CD4-positive, alpha-beta memory T cell (primary cell): ENCODE measurements at regions of chr17 and their contacts with region 1.

Region 1: DNA sequence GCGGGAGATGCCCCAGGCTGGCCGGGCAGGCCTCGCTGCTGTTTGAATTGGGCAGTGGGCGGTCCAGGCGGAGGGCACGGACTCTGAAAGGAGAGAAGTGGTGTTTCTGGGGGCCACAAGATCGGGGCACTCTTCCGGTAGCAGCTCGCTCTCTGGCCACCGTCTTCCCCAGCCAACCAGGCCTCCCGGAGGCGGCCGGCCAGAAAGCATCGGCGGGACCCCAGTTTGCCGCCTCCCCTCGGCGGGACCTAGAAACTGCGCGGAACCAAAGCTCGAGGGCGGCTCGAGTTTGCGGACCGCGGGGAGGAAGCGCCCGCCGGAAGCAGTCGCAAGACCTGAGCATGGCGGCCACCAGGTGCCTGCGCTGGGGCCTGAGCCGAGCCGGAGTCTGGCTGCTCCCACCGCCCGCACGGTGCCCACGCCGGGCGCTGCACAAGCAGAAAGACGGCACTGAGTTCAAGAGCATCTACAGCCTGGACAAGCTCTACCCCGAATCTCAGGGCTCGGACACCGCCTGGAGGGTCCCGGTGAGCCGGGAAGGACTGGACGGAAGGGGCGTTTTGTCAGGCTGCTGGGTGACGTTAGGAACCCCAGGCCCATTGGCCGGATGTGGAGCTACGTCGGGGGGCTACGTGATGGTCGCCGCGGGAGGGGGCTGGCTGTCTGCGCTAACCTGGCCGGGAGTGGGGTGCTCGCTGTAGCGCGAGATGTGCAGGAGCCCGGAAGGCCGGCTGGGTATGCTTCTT is at the start of gene MRPL58:
- DNase-seq: peak; percentile 75 to 79 (median 76)
- H3K4me3 ChIP-seq: peak within 1 kb of the TSS; percentile 85 to 90
- H3K4me3 Mint-ChIP-seq: peak within 1 kb of the TSS; percentile 93 to 98 (median 96)
- H3K27ac ChIP-seq: peak within 1 kb of the TSS; percentile 71
- H3K27ac Mint-ChIP-seq: peak within 1 kb of the TSS; percentile 80 to 94 (median 92)
- H3K4me1 ChIP-seq: peaks cover 19% of the 10 kb centered on the region
- H3K4me1 Mint-ChIP-seq: peaks cover 20 to 44% (median 32%) of the 10 kb centered on the region in 4 donors
- H3K27me3 ChIP-seq: no peaks in the 10 kb centered on the region
- H3K27me3 Mint-ChIP-seq: no peaks in the 10 kb centered on the region
- total RNA-seq, gene MRPL58: 22.6 to 26.7 TPM

Region 2: DNA sequence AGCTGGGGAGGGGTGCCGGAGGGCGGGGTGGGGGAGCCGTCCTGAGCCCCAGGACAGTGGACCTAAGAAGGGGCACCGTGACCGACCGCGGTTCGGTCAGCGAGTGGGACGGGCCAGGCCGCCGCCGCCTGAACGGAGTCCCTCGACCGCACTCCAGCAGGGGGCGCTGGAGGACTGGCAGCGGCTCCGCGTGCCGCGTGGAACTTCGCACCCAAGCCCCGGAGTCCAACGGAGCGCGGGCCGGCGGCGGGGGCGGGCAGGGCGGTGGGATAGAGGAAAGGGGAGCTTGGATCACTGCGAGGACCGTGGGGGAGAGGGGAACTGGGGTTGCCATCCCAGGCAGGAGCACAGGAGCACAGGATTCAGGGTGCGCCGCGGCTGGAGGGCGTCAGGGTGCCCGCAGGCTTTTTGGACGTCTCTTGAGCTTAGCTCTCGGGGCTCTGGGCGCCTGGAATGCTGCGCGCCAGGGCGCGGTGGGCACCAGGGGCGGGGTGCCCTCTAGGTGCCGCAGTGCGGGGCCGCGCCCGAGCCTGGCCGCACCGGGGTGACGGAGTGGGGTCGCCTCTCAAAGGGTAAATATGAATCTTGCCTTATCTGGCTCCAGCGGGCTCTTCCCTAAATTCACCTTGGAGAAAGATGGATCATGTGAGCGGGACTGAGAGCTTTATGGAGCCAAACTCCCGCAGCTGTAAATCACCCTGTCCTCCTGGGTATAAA is 88.8 kb before region 1 on chr17:
- CTCF ChIA-PET with region 1: no interaction called
- POLR2A ChIA-PET with region 1: no interaction called
- intact Hi-C with region 1: no loop called
- DNase-seq: peak; percentile 57 to 76 (median 68)
- H3K4me3 ChIP-seq: peak overlapping the region in 1 of 2 donors; percentile 14
- H3K4me3 Mint-ChIP-seq: peak overlapping the region in 6 of 8 donors; percentile 13 to 54 (median 44)
- H3K27ac ChIP-seq: no peak overlapping the region
- H3K27ac Mint-ChIP-seq: no peak overlapping the region
- H3K4me1 ChIP-seq: peaks cover 18% of the 10 kb centered on the region
- H3K4me1 Mint-ChIP-seq: peaks cover 1 to 17% (median 11%) of the 10 kb centered on the region in 4 donors
- H3K27me3 ChIP-seq: peaks cover 32% of the 10 kb centered on the region
- H3K27me3 Mint-ChIP-seq: peaks cover 40 to 46% of the 10 kb centered on the region in 2 donors

Region 3: DNA sequence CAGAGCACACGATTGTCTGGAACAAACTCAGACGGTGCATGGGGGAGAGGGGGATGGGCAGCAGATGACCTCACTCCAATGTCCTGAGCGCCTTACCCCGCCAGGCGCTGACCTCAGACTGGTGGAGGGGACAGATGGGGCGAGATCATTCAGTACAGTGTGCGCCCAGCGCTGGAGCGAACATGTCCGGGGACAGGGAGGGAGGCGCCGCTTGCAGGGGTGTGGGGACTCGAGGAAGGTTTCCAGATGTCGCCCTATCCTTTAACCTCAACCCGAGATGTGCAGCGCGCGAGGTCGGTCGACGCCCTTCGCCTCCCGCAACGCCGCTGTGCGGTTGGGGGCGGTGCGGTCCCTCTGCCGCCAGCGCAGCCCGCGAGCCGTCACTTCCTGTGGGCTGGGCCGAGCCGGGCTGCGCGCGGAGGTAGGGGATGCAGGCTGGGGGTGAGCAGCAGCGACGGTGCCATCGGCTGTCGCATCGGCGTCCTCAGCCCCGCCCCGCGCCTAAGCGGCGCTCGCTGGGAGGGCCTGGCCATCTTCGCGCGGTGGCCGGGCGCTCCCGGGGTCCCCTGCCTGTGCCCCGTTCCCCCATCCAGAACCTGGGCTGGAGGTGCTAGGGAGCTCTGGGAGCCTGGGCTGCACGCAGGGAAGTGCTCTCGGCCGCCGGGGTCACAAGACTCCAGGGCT is 30.4 kb before region 1 on chr17:
- CTCF ChIA-PET with region 1: interaction called, 22 read pairs
- POLR2A ChIA-PET with region 1: interaction called, 20 read pairs
- intact Hi-C with region 1: loop called (anchors 1 kb)
- DNase-seq: peak; percentile 83 to 87 (median 85)
- H3K4me3 ChIP-seq: peak overlapping the region; percentile 70 to 91
- H3K4me3 Mint-ChIP-seq: peak overlapping the region; percentile 86 to 94 (median 90)
- H3K27ac ChIP-seq: peak overlapping the region; percentile 30
- H3K27ac Mint-ChIP-seq: peak overlapping the region; percentile 89 to 98 (median 95)
- H3K4me1 ChIP-seq: peaks cover 27% of the 10 kb centered on the region
- H3K4me1 Mint-ChIP-seq: peaks cover 14 to 35% (median 18%) of the 10 kb centered on the region in 4 donors
- H3K27me3 ChIP-seq: no peaks in the 10 kb centered on the region
- H3K27me3 Mint-ChIP-seq: peaks cover 0 to under 1% of the 10 kb centered on the region in 2 donors

Region 4: GRCh38 chr17:74998783-74999182 is 13.7 kb before region 1 on chr17:
- CTCF ChIA-PET with region 1: interaction called, 15 read pairs
- POLR2A ChIA-PET with region 1: interaction called, 6 read pairs
- intact Hi-C with region 1: no loop called
- DNase-seq: no peak
- H3K4me3 ChIP-seq: no peak overlapping the region
- H3K4me3 Mint-ChIP-seq: no peak overlapping the region
- H3K27ac ChIP-seq: no peak overlapping the region
- H3K27ac Mint-ChIP-seq: no peak overlapping the region
- H3K4me1 ChIP-seq: no peaks in the 10 kb centered on the region
- H3K4me1 Mint-ChIP-seq: peaks cover 0 to 8% (median 6%) of the 10 kb centered on the region in 4 donors
- H3K27me3 ChIP-seq: no peaks in the 10 kb centered on the region
- H3K27me3 Mint-ChIP-seq: no peaks in the 10 kb centered on the region

Region 5: DNA sequence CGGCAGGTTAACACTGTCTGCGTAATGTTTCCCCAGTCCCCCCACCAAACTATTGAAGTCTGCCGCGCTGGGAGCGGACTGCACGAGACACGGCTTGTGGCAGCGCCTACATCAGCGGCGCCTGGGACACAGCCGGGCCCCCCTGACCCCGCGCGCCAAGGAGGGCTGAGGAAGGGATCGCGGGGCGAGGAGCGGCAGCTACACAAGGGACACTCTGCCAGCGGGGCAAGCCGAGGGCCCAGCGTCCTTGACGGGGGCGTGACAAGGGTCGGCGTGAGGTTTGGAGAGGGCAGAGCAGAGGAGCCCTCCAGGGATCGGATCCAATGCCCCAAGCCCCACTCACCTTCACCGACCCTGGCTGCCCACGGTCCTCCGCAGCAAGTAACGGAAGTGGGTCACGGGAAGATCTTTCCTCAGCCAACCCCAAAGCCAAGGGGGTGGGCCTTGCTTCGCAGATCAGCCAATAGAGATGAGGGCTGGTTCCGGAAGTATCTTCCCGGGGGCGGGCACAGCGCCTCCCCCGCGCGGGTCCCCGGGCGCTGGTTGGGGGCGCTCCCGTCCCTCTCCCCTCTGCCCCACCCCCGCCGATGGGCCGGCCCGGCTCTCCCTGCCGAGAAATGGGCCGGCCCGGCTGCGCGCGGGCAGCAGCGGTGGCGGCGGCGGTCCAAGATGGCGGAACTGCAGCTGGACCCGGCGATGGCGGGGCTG is 34.2 kb after region 1 on chr17 and contains the starts of genes ATP5PD and KCTD2:
- CTCF ChIA-PET with region 1: interaction called, 16 read pairs
- POLR2A ChIA-PET with region 1: interaction called, 42 read pairs
- intact Hi-C with region 1: loop called (anchors 1 kb)
- DNase-seq: peak; percentile 92 to 95 (median 94)
- H3K4me3 ChIP-seq: peak within 1 kb of the TSS; percentile 62 to 96
- H3K4me3 Mint-ChIP-seq: peak within 1 kb of the TSS; percentile 95 to 100 (median 97)
- H3K27ac ChIP-seq: peak within 1 kb of the TSS; percentile 85
- H3K27ac Mint-ChIP-seq: peak within 1 kb of the TSS; percentile 96 to 98 (median 97)
- H3K4me1 ChIP-seq: peaks cover 30% of the 10 kb centered on the region
- H3K4me1 Mint-ChIP-seq: peaks cover 25 to 63% (median 40%) of the 10 kb centered on the region in 4 donors
- H3K27me3 ChIP-seq: no peaks in the 10 kb centered on the region
- H3K27me3 Mint-ChIP-seq: no peaks in the 10 kb centered on the region
- total RNA-seq, gene ATP5PD: 167 to 171 TPM
- total RNA-seq, gene KCTD2: 31.1 to 31.7 TPM

Region 6: GRCh38 chr17:75087558-75088453 is 75.3 kb after region 1 on chr17 and contains the start of gene SLC16A5:
- CTCF ChIA-PET with region 1: interaction called, 3 read pairs
- POLR2A ChIA-PET with region 1: interaction called, 20 read pairs
- intact Hi-C with region 1: no loop called
- DNase-seq: peak; percentile 42 to 58 (median 45)
- H3K4me3 ChIP-seq: peak within 1 kb of the TSS; percentile 65 to 68
- H3K4me3 Mint-ChIP-seq: peak within 1 kb of the TSS; percentile 82 to 90 (median 84)
- H3K27ac ChIP-seq: peak within 1 kb of the TSS; percentile 64
- H3K27ac Mint-ChIP-seq: peak within 1 kb of the TSS; percentile 35 to 97 (median 81)
- H3K4me1 ChIP-seq: peaks cover 32% of the 10 kb centered on the region
- H3K4me1 Mint-ChIP-seq: peaks cover 36 to 64% (median 49%) of the 10 kb centered on the region in 4 donors
- H3K27me3 ChIP-seq: no peaks in the 10 kb centered on the region
- H3K27me3 Mint-ChIP-seq: no peaks in the 10 kb centered on the region
- total RNA-seq, gene SLC16A5: 12.5 to 13.9 TPM

Region 7: DNA sequence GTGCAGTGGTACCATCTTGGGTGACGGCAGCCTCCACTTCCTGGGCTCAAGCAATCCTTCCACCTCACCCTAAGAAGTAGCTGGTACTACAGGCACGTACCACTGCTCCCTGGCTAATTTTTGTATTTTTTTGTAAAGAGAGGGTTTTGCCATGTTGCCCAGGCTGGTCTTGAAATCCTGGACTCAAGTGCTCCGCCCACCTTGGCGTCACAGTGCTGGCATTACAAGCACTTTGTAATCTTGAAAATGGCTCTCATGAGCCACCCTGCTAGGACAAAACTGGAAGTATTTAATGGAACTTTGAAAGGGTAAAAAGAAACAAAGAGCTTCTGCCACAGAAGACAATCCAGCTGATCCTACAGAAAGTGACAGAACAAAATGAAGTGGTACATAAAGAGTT is 161.0 kb after region 1 on chr17:
- CTCF ChIA-PET with region 1: interaction called, 15 read pairs
- POLR2A ChIA-PET with region 1: no interaction called
- intact Hi-C with region 1: no loop called
- DNase-seq: no peak
- H3K4me3 ChIP-seq: no peak overlapping the region
- H3K4me3 Mint-ChIP-seq: no peak overlapping the region
- H3K27ac ChIP-seq: no peak overlapping the region
- H3K27ac Mint-ChIP-seq: peak overlapping the region in 4 of 7 donors; percentile 29 to 75 (median 38)
- H3K4me1 ChIP-seq: peaks cover 9% of the 10 kb centered on the region
- H3K4me1 Mint-ChIP-seq: peaks cover 7 to 26% (median 11%) of the 10 kb centered on the region in 4 donors
- H3K27me3 ChIP-seq: no peaks in the 10 kb centered on the region
- H3K27me3 Mint-ChIP-seq: no peaks in the 10 kb centered on the region